Activated CD8-positive, alpha-beta T cell treated with anti-CD3 and anti-CD28 coated beads for 36 hours (primary cell): ENCODE measurements at regions of chr12 and their contacts with region 1.

Region 1: GRCh38 chr12:44847888-44848702 is 28.0 kb downstream of the NELL2 start:
- DNase-seq: peak; percentile 88
- ATAC-seq: peak; percentile 77
- H3K4me3 Mint-ChIP-seq: peak overlapping the region; percentile 60
- H3K27ac Mint-ChIP-seq: peak overlapping the region; percentile 96
- H3K4me1 Mint-ChIP-seq: peaks cover 74% of the 10 kb centered on the region
- H3K27me3 Mint-ChIP-seq: no peaks in the 10 kb centered on the region
- CTCF ChIP-seq: no peak

Region 2: DNA sequence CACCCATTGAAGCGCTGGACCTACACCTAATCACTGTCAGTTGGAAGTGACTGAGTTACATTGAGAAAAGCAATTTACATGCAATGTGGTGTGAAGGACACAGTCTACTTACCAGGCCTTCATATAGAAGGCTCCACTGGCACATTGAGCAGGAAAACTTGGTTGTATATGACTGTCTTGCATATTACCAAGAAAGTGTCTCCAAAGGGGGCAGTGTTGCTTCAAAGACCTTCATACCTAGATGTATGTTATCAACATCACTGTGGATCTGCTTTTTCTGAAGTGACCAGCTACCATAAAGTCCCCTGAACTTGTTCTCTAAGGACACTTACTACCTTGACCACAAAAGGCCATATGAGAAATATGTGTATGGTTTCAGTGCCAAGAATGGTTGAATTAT is 36.0 kb before region 1 on chr12:
- CTCF ChIA-PET with region 1: interaction called, 16 read pairs
- POLR2A ChIA-PET with region 1: interaction called, 4 read pairs
- intact Hi-C with region 1: no loop called
- DNase-seq: peak; percentile 71
- ATAC-seq: peak; percentile 80
- H3K4me3 Mint-ChIP-seq: no peak overlapping the region
- H3K27ac Mint-ChIP-seq: peak overlapping the region; percentile 62
- H3K4me1 Mint-ChIP-seq: peaks cover 61% of the 10 kb centered on the region
- H3K27me3 Mint-ChIP-seq: no peaks in the 10 kb centered on the region
- CTCF ChIP-seq: peak; percentile 67

Region 3: DNA sequence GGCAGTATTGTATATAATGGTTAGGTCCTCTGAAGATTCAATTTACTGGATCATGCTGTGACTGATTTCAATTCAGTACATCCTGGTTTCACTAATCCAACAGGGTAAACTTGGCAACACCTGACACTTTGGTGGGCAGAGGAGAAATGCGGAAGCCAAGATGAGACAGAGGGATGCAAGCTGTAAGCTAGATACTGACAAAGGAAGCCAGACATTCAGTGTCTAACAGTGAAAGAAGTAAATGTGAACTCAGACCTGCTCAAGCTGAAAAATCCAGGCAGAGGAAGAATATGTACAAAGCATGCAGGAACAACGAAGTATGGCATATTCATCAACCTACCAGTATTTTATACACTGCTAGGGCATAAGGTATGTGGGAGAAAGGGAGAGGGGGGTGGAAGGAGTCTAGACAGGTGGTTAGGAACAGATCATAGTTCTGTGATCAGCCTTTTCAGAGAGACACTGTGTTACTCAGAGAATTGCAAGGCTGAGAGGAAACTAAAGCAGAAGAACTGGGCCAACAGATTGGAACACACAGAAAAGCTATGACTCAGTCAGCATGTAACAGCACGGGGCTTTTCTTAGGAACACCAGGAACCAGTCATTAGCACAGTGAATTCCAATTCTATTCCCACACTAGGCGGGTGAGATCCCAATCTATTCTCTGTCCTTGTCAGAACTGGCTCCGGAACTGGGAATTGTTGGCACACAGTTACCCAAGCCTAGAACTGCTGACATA is 12.3 kb before region 1 on chr12:
- CTCF ChIA-PET with region 1: interaction called, 4 read pairs
- POLR2A ChIA-PET with region 1: interaction called, 37 read pairs
- intact Hi-C with region 1: no loop called
- DNase-seq: peak; percentile 49
- ATAC-seq: peak; percentile 80
- H3K4me3 Mint-ChIP-seq: peak overlapping the region; percentile 63
- H3K27ac Mint-ChIP-seq: peak overlapping the region; percentile 95
- H3K4me1 Mint-ChIP-seq: peaks cover 96% of the 10 kb centered on the region
- H3K27me3 Mint-ChIP-seq: no peaks in the 10 kb centered on the region
- CTCF ChIP-seq: no peak

Region 4: DNA sequence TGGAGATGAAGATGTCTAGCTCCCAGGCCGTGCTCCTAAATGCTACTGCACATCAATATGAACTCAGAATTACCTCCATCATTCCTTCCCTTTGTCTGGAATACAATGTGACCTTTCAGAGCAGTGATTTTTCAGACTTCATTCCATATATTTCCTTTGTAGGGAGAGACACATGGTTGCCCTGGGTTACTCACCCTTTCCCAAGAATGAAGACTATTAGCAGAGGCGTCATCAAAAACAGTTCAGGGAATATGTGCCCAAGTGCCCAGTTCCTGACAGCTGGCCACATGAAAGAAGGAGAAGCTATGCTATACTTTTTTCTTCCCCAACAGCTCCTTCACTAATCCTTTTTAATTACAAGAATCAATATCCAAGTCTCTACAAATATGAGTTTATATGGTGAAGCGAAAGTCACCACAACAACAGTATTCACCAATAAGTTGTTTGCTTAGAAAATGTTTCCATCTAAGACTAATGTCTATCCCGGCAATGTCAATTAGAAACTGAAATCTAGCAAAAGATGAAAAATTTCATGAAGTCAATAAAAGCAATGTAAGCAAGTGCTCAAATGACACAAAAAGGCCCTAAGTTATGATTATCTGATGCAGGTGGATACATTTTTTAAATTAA is 10.2 kb after region 1 on chr12:
- CTCF ChIA-PET with region 1: interaction called, 4 read pairs
- POLR2A ChIA-PET with region 1: interaction called, 13 read pairs
- intact Hi-C with region 1: no loop called
- DNase-seq: no peak
- ATAC-seq: no peak
- H3K4me3 Mint-ChIP-seq: no peak overlapping the region
- H3K27ac Mint-ChIP-seq: peak overlapping the region; percentile 23
- H3K4me1 Mint-ChIP-seq: peaks cover 82% of the 10 kb centered on the region
- H3K27me3 Mint-ChIP-seq: no peaks in the 10 kb centered on the region
- CTCF ChIP-seq: no peak